Transverse colon (tissue), 4 donors: ENCODE measurements at regions of chr1 and their contacts with region 1.

Region 1: GRCh38 chr1:156618853-156619581 is at the start of gene HAPLN2:
- DNase-seq: no peak
- H3K4me3 ChIP-seq: no peak within 1 kb of the TSS
- H3K27ac ChIP-seq: no peak within 1 kb of the TSS
- H3K4me1 ChIP-seq: peaks cover 3 to 12% (median 7%) of the 10 kb centered on the region in 4 donors
- H3K27me3 ChIP-seq: peaks cover 64% of the 10 kb centered on the region
- CTCF ChIP-seq: peak in 1 of 5 experiments; percentile 23
- EP300 ChIP-seq: no peak
- POLR2A ChIP-seq: no peak
- total RNA-seq, gene HAPLN2: 0.55 to 1.9 TPM in 2 of 4 donors, not detected in the others

Region 2: GRCh38 chr1:156394835-156395461 is 224.1 kb before region 1 on chr1:
- in situ Hi-C with region 1: loop called in 1 of 4 experiments (anchors 25 kb)
- intact Hi-C with region 1: loop called (anchors 10 kb)
- DNase-seq: no peak
- H3K4me3 ChIP-seq: no peak overlapping the region
- H3K27ac ChIP-seq: no peak overlapping the region
- H3K4me1 ChIP-seq: no peaks in the 10 kb centered on the region
- H3K27me3 ChIP-seq: peaks cover 31% of the 10 kb centered on the region
- CTCF ChIP-seq: no peak
- EP300 ChIP-seq: no peak
- POLR2A ChIP-seq: no peak

Region 3: DNA sequence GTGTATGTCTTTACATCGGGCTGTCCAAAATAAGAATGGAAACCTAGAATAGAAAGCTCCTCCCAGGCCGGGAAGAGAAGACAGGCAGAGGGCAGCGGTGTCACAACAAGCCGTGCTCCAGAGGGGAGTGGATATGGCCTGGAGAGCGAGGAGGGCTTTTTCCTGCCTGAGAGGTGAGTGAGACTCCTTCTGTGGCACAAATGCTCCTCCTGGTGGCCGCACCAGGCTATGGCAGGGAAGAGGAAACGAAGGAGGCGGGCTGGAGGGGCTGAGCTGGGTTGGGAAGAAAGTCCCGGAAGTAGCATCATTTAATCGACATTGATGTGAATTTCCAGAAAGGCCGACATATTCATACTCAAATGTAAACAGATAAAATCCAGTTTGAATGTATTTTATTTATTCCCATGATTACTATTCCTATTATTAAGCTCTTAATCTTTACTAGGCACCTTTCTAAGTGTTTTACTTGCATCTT is 173.2 kb before region 1 on chr1:
- in situ Hi-C with region 1: no loop called
- intact Hi-C with region 1: no loop called
- DNase-seq: peak; percentile 85
- H3K4me3 ChIP-seq: no peak overlapping the region
- H3K27ac ChIP-seq: no peak overlapping the region
- H3K4me1 ChIP-seq: peaks cover 0 to 6% (median 1%) of the 10 kb centered on the region in 4 donors
- H3K27me3 ChIP-seq: peaks cover 43% of the 10 kb centered on the region
- CTCF ChIP-seq: peak; percentile 93 to 97 (median 95)
- EP300 ChIP-seq: no peak
- POLR2A ChIP-seq: no peak

Region 4: GRCh38 chr1:156540791-156541383 is 78.1 kb before region 1 on chr1:
- in situ Hi-C with region 1: no loop called
- intact Hi-C with region 1: no loop called
- DNase-seq: no peak
- H3K4me3 ChIP-seq: no peak overlapping the region
- H3K27ac ChIP-seq: no peak overlapping the region
- H3K4me1 ChIP-seq: no peaks in the 10 kb centered on the region
- H3K27me3 ChIP-seq: no peaks in the 10 kb centered on the region
- CTCF ChIP-seq: no peak
- EP300 ChIP-seq: no peak
- POLR2A ChIP-seq: no peak